Head of caudate nucleus (tissue), 42 donors: ENCODE measurements at regions of chr17 and their contacts with region 1.

Region 1: GRCh38 chr17:29625037-29625750 is 2.5 kb upstream of the CORO6 start:
- DNase-seq: peak in 40 of 42 donors; percentile 45 to 87 (median 72)

Region 2: DNA sequence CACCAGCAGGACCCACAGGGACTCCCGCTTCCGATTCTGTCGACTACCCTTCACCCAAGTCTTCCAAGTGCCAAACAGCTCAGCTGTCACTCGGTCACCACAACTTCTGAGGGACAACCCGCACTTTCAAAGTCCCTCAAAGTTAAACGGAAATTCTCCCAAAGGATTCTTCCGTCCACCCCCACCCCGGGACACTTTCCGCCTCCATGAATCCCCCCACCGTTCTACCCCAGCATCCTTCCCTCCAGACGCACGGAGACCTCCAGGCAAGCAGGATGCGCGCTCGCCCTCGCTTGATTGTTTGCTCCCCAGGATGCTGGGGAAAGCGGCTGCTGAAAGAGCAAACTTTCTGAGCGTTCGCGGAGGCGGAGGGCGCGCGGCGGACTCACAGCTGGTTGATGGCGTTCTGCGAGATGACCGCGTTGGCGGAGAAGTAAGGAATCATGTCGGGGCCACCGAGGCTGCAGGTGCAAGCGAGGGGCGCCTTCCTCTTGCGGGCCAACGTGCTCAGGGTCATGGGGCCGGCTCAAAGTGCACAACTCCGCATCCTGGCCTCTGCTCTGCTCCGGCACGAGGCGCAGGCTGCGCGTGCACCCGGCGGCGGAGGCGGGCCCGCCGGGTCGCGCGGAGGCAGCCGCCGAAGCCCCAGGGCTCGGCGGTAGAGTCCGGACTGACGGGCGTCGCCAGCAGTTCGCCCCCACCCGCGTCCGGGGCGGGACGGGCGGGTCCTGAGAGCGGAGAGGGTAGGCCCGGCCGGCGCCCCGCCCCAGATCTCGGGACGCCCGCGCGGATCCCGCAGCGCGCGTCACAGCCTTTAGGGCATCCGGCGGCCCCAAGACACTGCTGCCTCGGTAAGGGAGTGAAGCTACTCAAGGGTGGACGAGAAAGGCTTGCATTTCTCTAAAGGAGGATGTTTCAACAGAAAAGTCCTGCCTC is 135.8 kb after region 1 on chr17:
- intact Hi-C with region 1: loop called (anchors 5 kb)
- DNase-seq: peak; percentile 63 to 91 (median 84)